Dendritic cell treated with granulocyte-macrophage colony-stimulating factor and Interleukin-4, amounts not matched to agents 40 ng/mL and 50 ng/mL, for 4 days (primary cell): ENCODE measurements at regions of chr3 and their contacts with region 1.

Region 1: GRCh38 chr3:146065573-146066006 is 95.4 kb downstream of the PLOD2 start:
- H3K4me3 Mint-ChIP-seq: no peak overlapping the region
- H3K27ac Mint-ChIP-seq: no peak overlapping the region
- H3K4me1 Mint-ChIP-seq: no peaks in the 10 kb centered on the region
- H3K27me3 Mint-ChIP-seq: no peaks in the 10 kb centered on the region

Region 2: DNA sequence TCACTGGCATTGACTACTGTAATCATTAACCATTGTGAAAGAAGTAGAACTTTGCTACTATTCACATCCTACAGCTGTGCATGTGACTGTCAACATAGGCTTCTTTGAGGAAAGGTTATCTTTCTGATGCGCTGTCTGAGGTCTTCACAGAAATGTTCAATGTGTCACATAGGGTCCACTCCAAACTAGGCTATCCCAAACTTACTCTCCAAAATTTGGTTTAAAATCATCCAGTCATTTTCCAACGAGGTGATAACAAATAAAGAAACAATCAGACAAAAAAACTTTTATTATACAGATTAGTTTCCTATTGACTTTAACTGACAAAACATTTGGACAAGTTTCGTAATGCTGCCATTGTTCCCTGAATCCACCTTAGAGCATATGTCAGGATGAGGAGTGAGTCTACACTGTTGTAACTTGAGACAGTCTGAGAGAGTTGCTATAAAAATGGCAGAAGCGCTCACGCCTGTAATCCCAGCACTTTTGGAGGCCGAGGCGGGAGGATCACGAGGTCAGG is 416.2 kb before region 1 on chr3:
- intact Hi-C with region 1: no loop called
- H3K4me3 Mint-ChIP-seq: no peak overlapping the region
- H3K27ac Mint-ChIP-seq: no peak overlapping the region
- H3K4me1 Mint-ChIP-seq: no peaks in the 10 kb centered on the region
- H3K27me3 Mint-ChIP-seq: no peaks in the 10 kb centered on the region

Region 3: GRCh38 chr3:146189519-146190173 is 124.1 kb after region 1 on chr3:
- intact Hi-C with region 1: loop called (anchors 2 kb)
- H3K4me3 Mint-ChIP-seq: no peak overlapping the region
- H3K27ac Mint-ChIP-seq: no peak overlapping the region
- H3K4me1 Mint-ChIP-seq: peaks cover 5% of the 10 kb centered on the region
- H3K27me3 Mint-ChIP-seq: no peaks in the 10 kb centered on the region

Region 4: DNA sequence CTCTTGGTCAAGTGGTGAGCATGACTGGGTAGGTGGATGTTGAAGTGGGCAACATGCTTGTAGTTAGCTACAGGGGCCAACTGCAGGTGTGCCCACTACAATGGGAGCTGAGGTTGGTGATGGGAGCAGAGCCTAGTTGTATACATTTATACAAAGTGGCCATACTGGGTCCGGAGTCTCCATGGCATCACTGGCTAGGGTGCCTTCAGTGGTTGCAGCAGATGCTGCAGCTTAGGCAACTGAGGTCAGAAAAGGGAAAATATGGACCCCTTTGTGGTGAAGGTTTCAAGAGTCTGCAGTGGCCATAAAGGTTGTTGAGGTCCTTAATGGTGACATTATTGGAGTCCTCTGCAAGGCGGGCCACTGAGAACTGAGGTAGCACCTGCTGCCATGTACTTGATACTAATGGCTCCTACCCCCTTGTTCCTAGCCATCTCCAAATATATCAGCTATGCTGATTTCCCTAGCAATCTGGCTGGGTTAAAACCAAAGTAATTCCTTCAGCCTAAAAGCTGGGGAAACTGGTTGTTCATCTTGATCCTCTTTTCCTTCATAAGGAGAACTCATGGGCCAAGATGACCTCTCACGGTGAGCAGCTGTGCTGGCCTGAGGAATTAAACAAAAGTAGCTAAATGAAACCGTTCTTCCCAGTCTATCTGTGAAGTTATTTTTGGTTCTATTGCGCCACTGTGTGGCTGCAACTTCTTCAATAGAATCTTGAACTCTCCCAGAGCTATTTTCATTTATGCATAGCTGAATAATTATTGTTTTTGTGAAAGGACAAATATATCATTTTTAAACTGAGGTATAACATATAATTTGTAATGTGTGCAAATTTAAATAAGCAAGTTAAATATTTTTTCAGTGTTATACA is 261.3 kb after region 1 on chr3:
- intact Hi-C with region 1: loop called (anchors 10 kb)
- H3K4me3 Mint-ChIP-seq: no peak overlapping the region
- H3K27ac Mint-ChIP-seq: no peak overlapping the region
- H3K4me1 Mint-ChIP-seq: no peaks in the 10 kb centered on the region
- H3K27me3 Mint-ChIP-seq: no peaks in the 10 kb centered on the region

Region 5: GRCh38 chr3:146577662-146578061 is 512.1 kb after region 1 on chr3:
- intact Hi-C with region 1: loop called (anchors 5 kb)
- H3K4me3 Mint-ChIP-seq: no peak overlapping the region
- H3K27ac Mint-ChIP-seq: no peak overlapping the region
- H3K4me1 Mint-ChIP-seq: peaks cover 8% of the 10 kb centered on the region
- H3K27me3 Mint-ChIP-seq: no peaks in the 10 kb centered on the region

Region 6: GRCh38 chr3:146640955-146641867 is 575.6 kb after region 1 on chr3:
- intact Hi-C with region 1: loop called (anchors 10 kb)
- H3K4me3 Mint-ChIP-seq: no peak overlapping the region
- H3K27ac Mint-ChIP-seq: no peak overlapping the region
- H3K4me1 Mint-ChIP-seq: no peaks in the 10 kb centered on the region
- H3K27me3 Mint-ChIP-seq: peaks cover 2% of the 10 kb centered on the region

Region 7: GRCh38 chr3:147191795-147192385 is 1126.3 kb after region 1 on chr3:
- intact Hi-C with region 1: loop called (anchors 10 kb)
- H3K4me3 Mint-ChIP-seq: no peak overlapping the region
- H3K27ac Mint-ChIP-seq: no peak overlapping the region
- H3K4me1 Mint-ChIP-seq: no peaks in the 10 kb centered on the region
- H3K27me3 Mint-ChIP-seq: no peaks in the 10 kb centered on the region